Activated CD4-positive, alpha-beta T cell treated with anti-CD3 and anti-CD28 coated beads for 36 hours (primary cell): ENCODE measurements at regions of chr5 and their contacts with region 1.

Region 1: DNA sequence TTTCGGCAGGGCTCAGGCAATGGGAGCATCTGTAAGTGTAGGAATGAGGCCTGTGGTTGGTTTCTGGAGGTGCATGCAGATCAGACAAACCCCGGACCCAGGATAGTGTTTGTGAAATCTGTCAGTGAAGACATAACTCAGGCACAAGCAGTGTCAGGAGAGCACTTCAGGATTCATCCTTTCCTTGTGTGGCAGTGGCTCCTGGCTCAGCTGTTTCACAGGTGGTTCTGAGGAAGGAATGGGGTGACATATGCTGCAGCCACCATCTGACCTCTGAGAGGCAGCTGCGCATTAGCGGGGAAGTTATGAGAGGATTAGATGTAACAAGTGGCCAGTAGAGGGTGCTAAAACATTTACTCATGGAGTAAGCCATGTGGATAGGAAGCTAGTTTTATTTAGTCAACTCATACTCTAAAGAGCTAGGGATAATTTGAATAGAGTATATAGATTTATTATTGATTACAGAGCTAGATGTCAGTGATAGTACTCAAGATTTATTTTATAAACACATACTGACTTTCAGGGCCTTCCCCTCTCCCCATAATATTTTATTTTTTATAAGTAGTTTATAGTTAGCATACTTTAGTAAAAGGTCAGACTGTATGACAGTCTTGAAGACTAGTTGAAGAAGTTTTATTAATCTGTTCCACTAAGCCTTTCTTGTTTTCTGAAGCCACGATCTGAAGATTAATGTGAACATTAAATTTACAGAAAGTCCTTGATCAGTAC is 28.4 kb downstream of the NNT start:
- DNase-seq: peak; percentile 45
- ATAC-seq: peak; percentile 95
- H3K4me3 Mint-ChIP-seq: no peak overlapping the region
- H3K27ac Mint-ChIP-seq: no peak overlapping the region
- H3K4me1 Mint-ChIP-seq: peaks cover 4% of the 10 kb centered on the region
- H3K27me3 Mint-ChIP-seq: no peaks in the 10 kb centered on the region

Region 2: GRCh38 chr5:43569236-43569635 is 62.1 kb before region 1 on chr5:
- CTCF ChIA-PET with region 1: no interaction called
- POLR2A ChIA-PET with region 1: no interaction called
- intact Hi-C with region 1: no loop called
- DNase-seq: no peak
- ATAC-seq: no peak
- H3K4me3 Mint-ChIP-seq: no peak overlapping the region
- H3K27ac Mint-ChIP-seq: no peak overlapping the region
- H3K4me1 Mint-ChIP-seq: peaks cover 4% of the 10 kb centered on the region
- H3K27me3 Mint-ChIP-seq: no peaks in the 10 kb centered on the region

Region 3: GRCh38 chr5:43616535-43616934 is 14.8 kb before region 1 on chr5:
- CTCF ChIA-PET with region 1: interaction called, 26 read pairs
- POLR2A ChIA-PET with region 1: no interaction called
- intact Hi-C with region 1: no loop called
- DNase-seq: no peak
- ATAC-seq: no peak
- H3K4me3 Mint-ChIP-seq: no peak overlapping the region
- H3K27ac Mint-ChIP-seq: no peak overlapping the region
- H3K4me1 Mint-ChIP-seq: no peaks in the 10 kb centered on the region
- H3K27me3 Mint-ChIP-seq: no peaks in the 10 kb centered on the region